Ovary (tissue), 10 donors: ENCODE measurements at regions of chr19 and their contacts with region 1.

Region 1: GRCh38 chr19:4390567-4391305 is 9.6 kb downstream of the SH3GL1 start:
- DNase-seq: peak in 1 of 5 donors; percentile 26
- H3K4me3 ChIP-seq: no peak overlapping the region
- H3K27ac ChIP-seq: peak overlapping the region; percentile 51 to 52
- H3K4me1 ChIP-seq: peaks cover 32% of the 10 kb centered on the region
- H3K27me3 ChIP-seq: no peaks in the 10 kb centered on the region
- CTCF ChIP-seq: no peak
- EP300 ChIP-seq: no peak
- POLR2A ChIP-seq: no peak

Region 2: GRCh38 chr19:4359627-4360000 is 31.1 kb before region 1 on chr19:
- intact Hi-C with region 1: loop called in 2 of 4 experiments (anchors 5 kb)
- DNase-seq: peak in 2 of 5 donors; percentile 46 to 47
- H3K4me3 ChIP-seq: no peak overlapping the region
- H3K27ac ChIP-seq: peak overlapping the region; percentile 70 to 88
- H3K4me1 ChIP-seq: peaks cover 25% of the 10 kb centered on the region
- H3K27me3 ChIP-seq: no peaks in the 10 kb centered on the region
- CTCF ChIP-seq: no peak
- EP300 ChIP-seq: no peak
- POLR2A ChIP-seq: no peak

Region 3: GRCh38 chr19:4456843-4457653 is 66.3 kb after region 1 on chr19:
- intact Hi-C with region 1: no loop called
- DNase-seq: peak in 1 of 5 donors; percentile 74
- H3K4me3 ChIP-seq: peak overlapping the region; percentile 92
- H3K27ac ChIP-seq: peak overlapping the region; percentile 81 to 88
- H3K4me1 ChIP-seq: peaks cover 17% of the 10 kb centered on the region
- H3K27me3 ChIP-seq: no peaks in the 10 kb centered on the region
- CTCF ChIP-seq: no peak
- EP300 ChIP-seq: no peak
- POLR2A ChIP-seq: no peak